ENCODE measurements at regions of chr7 and their contacts with region 1.

Region 1: DNA sequence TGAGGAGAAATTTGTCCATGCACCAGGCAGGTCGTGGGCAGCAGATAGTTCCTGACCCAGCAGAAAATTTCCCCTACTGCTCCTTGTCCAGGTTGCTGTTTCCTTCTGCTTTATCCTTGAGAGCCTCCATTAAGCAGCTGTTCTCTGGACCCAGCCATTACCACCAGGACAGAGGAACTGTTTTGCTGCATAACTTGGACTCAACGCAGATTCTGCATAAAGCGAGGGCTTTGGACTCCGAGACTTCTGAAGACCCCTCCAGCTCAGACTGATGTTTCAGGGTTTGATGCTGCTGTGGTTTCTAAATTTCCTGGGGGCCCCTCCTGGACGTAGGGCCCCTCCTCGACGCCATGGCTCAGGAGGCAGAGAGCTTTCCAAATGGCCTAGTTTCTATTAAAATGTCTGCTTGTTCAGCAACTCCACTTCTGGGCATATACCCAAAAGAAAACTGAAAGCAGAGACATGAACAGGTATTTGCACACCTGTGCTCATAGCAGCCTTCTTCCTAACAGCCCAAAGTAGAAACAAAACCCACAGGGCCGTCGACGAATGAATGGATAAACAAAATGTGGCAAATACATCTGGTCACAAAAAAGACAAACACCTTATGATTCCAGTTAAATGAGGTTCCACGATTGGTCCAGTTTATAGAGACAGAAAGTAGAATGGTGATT is 28.3 kb upstream of the LMTK2 start:
- DNase-seq: no peak
- H3K4me3 Mint-ChIP-seq: no peak overlapping the region
- H3K27ac Mint-ChIP-seq: no peak overlapping the region
- H3K4me1 Mint-ChIP-seq: no peaks in the 10 kb centered on the region
- H3K27me3 Mint-ChIP-seq: no peaks in the 10 kb centered on the region
- CTCF ChIP-seq: no peak

Region 2: DNA sequence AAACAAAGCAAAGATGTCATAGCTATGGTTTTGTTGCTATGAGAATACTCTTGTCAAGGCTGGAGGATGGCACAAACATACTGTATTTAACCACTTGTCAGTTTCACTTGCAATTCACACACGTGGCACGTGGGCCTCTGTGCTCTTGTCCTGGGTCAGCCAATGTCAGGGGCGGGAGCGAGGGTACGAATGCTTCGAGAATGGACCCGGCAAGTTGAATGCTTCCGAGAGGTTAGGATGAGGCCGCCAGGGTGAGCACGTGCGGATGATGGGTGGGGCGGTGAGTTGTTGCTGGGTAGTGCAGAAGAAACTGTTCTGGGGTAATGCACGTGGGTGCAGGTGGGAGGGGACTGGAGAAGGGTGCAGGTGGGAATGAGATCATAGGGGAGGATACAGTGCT is 78.0 kb before region 1 on chr7:
- CTCF ChIA-PET with region 1: interaction called, 13 read pairs
- intact Hi-C with region 1: no loop called
- DNase-seq: no peak
- H3K4me3 Mint-ChIP-seq: no peak overlapping the region
- H3K27ac Mint-ChIP-seq: no peak overlapping the region
- H3K4me1 Mint-ChIP-seq: no peaks in the 10 kb centered on the region
- H3K27me3 Mint-ChIP-seq: peaks cover 44% of the 10 kb centered on the region
- CTCF ChIP-seq: no peak

Region 3: GRCh38 chr7:98202367-98203195 is 124.2 kb after region 1 on chr7:
- CTCF ChIA-PET with region 1: no interaction called
- intact Hi-C with region 1: no loop called
- DNase-seq: no peak
- H3K4me3 Mint-ChIP-seq: no peak overlapping the region
- H3K27ac Mint-ChIP-seq: no peak overlapping the region
- H3K4me1 Mint-ChIP-seq: peaks cover 8% of the 10 kb centered on the region
- H3K27me3 Mint-ChIP-seq: no peaks in the 10 kb centered on the region
- CTCF ChIP-seq: no peak